BJ (cell line): ENCODE measurements at regions of chr17 and their contacts with region 1.

Region 1: GRCh38 chr17:1267471-1267947 is 2.7 kb upstream of the BHLHA9 start:
- DNase-seq: no peak
- H3K4me3 ChIP-seq: peak overlapping the region; percentile 78
- H3K27me3 ChIP-seq: peaks cover 7% of the 10 kb centered on the region
- CTCF ChIP-seq: no peak

Region 2: GRCh38 chr17:1098387-1098786 is 169.1 kb before region 1 on chr17:
- CTCF ChIA-PET with region 1: no interaction called
- POLR2A ChIA-PET with region 1: no interaction called
- DNase-seq: no peak
- H3K4me3 ChIP-seq: no peak overlapping the region
- H3K27me3 ChIP-seq: no peaks in the 10 kb centered on the region
- CTCF ChIP-seq: no peak

Region 3: GRCh38 chr17:1179818-1180742 is 87.4 kb before region 1 on chr17 and contains the start of gene ABR:
- CTCF ChIA-PET with region 1: no interaction called
- POLR2A ChIA-PET with region 1: no interaction called
- DNase-seq: no peak
- H3K4me3 ChIP-seq: peak within 1 kb of the TSS; percentile 67
- H3K27me3 ChIP-seq: no peaks in the 10 kb centered on the region
- CTCF ChIP-seq: no peak
- polyA plus RNA-seq, gene ABR: 32.7 and 65.4 TPM in 2 replicates

Region 4: DNA sequence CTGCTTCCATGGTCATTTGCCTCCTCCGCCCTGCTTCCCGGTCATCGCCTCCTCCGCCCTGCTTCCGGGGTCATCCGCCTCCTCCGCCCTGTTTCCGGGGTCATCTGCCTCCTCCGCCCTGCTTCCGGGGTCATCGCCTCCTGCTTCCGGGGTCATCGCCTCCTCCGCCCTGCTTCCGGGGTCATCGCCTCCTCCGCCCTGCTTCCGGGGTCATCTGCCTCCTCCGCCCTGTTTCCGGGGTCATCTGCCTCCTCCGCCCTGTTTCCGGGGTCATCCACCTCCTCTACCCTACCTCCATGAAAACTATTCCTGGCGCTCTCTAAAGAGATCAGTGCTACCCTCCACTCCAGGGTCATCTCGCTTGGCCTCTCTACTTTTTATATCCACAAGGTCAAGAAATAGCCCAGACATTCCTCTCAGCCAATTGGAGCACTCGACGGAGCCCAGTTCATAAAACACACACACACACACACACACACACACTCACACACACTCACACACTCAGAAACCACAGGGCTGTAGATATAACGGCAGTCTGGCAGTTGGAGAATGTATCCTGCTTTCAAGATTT is 56.8 kb after region 1 on chr17:
- CTCF ChIA-PET with region 1: interaction called, 3 read pairs
- POLR2A ChIA-PET with region 1: interaction called, 13 read pairs
- DNase-seq: no peak
- H3K4me3 ChIP-seq: no peak overlapping the region
- H3K27me3 ChIP-seq: peaks cover 2% of the 10 kb centered on the region; the same call in 1 of the 2 replicates
- CTCF ChIP-seq: no peak

Region 5: DNA sequence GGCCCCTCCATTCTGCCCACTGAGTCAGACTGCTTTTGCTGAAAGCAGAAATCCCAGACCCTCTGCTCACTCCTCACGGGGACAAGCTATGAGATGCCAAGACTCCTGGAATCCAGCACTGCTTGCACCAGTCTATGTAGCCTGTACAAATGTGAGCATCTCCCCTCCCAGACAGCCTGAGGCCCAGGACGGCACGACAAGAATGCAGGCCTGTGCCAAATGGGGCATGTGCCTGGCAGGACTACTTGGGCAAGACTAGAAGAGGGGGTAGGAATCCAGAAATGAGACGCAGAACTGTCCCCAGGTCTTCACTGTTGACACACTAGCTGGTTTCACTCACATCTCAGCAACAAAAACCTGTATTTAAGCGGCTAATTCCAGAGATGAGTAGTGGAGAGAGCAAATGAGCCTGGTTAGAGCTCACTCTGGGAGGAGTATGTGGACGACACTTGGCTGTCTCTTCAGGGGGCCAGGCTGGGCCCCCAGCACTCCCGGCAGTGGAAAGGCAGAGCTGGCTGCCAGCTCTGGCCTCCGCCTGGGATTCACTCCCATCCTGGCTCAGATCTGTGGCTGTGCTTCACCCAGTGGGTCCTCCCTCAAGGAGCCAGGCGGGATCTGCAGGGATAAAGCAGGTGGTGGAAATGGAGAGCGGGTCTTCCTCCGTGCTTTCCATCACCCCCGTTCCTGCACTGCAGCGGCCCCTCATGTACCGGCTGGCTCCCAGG is 227.9 kb after region 1 on chr17:
- CTCF ChIA-PET with region 1: no interaction called
- POLR2A ChIA-PET with region 1: interaction called, 11 read pairs
- DNase-seq: no peak
- H3K4me3 ChIP-seq: no peak overlapping the region
- H3K27me3 ChIP-seq: no peaks in the 10 kb centered on the region
- CTCF ChIP-seq: no peak